ENCODE measurements at regions of chr6 and their contacts with region 1.

Region 1: GRCh38 chr6:37566111-37566949 is 66.6 kb upstream of the CCDC167 start:
- DNase-seq: no peak
- ATAC-seq: peak; percentile 77

Region 2: DNA sequence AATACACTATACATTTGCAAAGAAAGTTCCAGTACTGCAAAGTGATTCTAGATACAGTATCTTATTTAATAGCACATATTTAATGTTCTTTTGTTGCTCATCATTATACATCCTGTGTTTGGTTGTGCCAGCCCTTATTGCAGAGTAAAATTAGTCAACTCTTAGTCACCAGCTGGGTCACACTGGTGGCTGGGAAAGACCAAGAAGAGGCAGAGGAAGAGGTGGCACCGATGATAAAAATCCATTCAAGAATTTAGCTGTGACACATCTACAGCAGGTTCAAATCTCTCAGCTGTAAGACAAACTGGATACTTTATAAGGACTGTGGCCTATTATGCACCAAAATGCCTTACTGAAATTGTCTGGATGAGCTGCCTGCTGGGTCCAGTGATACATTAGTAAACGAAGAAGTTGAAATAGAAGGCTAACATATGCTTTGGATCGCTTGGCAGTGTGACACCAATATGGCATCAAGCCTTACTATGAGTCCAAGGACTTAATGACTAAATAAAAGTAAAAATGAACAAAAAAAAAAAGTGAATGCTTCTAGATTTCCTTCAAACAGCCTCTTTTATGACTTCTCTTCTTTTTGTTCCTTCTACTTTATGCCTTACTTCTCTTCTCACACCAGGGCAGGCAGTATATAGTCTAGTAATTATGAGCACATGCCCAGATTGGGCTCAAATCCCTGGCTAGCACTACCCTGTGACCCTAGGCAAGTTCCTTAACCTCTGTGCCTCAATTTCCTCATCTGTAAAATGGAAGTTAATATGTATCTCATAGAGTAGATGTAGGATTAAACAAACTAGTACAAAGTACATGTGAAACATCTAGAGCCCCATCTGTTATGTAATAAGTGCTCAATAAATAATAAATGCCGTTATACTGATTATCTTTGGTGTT is 241.9 kb before region 1 on chr6:
- intact Hi-C with region 1: loop called (anchors 5 kb)
- DNase-seq: no peak
- ATAC-seq: no peak

Region 3: GRCh38 chr6:37381579-37381978 is 184.8 kb before region 1 on chr6:
- intact Hi-C with region 1: loop called (anchors 5 kb)
- DNase-seq: no peak
- ATAC-seq: peak; percentile 56

Region 4: GRCh38 chr6:37483917-37484785 is 82.2 kb before region 1 on chr6:
- intact Hi-C with region 1: loop called (anchors 2 kb)
- DNase-seq: peak; percentile 82
- ATAC-seq: peak; percentile 56

Region 5: GRCh38 chr6:37717836-37718251 is 151.5 kb after region 1 on chr6:
- intact Hi-C with region 1: no loop called
- DNase-seq: no peak
- ATAC-seq: no peak

Measured in Right ventricle myocardium inferior (tissue), 1 donor.